MCF 10A (cell line): ENCODE measurements at regions of chr4 and their contacts with region 1.

Region 1: GRCh38 chr4:34720571-34720970 is 1523.7 kb downstream of the ARAP2 start:
- DNase-seq: peak; percentile 64
- H3K4me3 Mint-ChIP-seq: no peak overlapping the region
- H3K27ac Mint-ChIP-seq: no peak overlapping the region
- H3K4me1 Mint-ChIP-seq: peaks cover 6% of the 10 kb centered on the region
- H3K27me3 Mint-ChIP-seq: no peaks in the 10 kb centered on the region
- CTCF ChIP-seq: peak; percentile 66

Region 2: DNA sequence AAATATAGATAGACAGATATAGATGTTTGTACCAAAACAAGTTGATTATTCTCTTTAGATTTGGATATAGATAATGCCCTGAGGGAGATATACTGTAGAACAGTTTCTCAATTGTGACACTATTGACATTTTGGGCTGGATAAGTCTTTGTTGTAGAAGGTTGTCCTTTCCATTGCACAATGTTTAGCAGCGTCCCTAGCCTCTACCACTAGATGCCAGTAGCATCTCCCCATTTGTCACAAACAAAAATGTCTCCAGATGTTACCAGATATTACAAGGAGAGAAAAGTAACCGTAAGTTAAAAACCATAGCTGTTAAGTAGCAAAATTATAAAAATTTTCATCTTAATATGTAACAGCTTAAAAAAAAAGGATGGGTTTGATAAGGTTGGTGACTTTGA is 1071.6 kb before region 1 on chr4:
- CTCF ChIA-PET with region 1: interaction called, 23 read pairs
- POLR2A ChIA-PET with region 1: no interaction called
- intact Hi-C with region 1: loop called (anchors 1 kb)
- DNase-seq: peak; percentile 42
- H3K4me3 Mint-ChIP-seq: no peak overlapping the region
- H3K27ac Mint-ChIP-seq: no peak overlapping the region
- H3K4me1 Mint-ChIP-seq: peaks cover 7% of the 10 kb centered on the region
- H3K27me3 Mint-ChIP-seq: no peaks in the 10 kb centered on the region
- CTCF ChIP-seq: peak; percentile 57

Region 3: GRCh38 chr4:33715841-33716395 is 1004.7 kb before region 1 on chr4:
- CTCF ChIA-PET with region 1: interaction called, 4 read pairs
- POLR2A ChIA-PET with region 1: no interaction called
- intact Hi-C with region 1: loop called (anchors 10 kb)
- DNase-seq: peak; percentile 93
- H3K4me3 Mint-ChIP-seq: peak overlapping the region; percentile 33
- H3K27ac Mint-ChIP-seq: peak overlapping the region; percentile 81
- H3K4me1 Mint-ChIP-seq: peaks cover 8% of the 10 kb centered on the region
- H3K27me3 Mint-ChIP-seq: peaks cover 12% of the 10 kb centered on the region
- CTCF ChIP-seq: no peak

Region 4: GRCh38 chr4:34422472-34423175 is 297.9 kb before region 1 on chr4:
- CTCF ChIA-PET with region 1: interaction called, 6 read pairs
- POLR2A ChIA-PET with region 1: no interaction called
- intact Hi-C with region 1: loop called (anchors 10 kb)
- DNase-seq: peak; percentile 3
- H3K4me3 Mint-ChIP-seq: no peak overlapping the region
- H3K27ac Mint-ChIP-seq: no peak overlapping the region
- H3K4me1 Mint-ChIP-seq: no peaks in the 10 kb centered on the region
- H3K27me3 Mint-ChIP-seq: no peaks in the 10 kb centered on the region
- CTCF ChIP-seq: no peak

Region 5: DNA sequence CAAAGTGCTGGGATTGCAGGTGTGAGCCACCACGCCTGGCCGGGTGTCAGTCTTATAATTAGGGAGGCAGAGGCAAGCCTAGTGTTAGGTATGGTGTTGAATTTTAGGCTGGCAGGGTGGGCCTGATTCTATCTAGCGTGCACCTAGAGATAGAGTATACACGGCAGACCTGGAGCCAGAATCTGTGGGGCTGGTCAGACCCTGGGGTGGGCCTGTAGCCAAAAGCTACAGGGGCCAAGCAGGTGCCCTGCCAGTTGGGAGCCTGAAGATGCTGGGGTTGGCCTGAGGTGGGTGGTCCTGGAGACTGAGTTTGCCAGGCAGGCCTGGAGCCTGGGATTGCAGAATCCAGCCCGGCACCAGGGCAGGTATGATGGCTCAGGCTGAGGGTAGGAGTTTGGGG is 56.5 kb before region 1 on chr4:
- CTCF ChIA-PET with region 1: no interaction called
- POLR2A ChIA-PET with region 1: no interaction called
- intact Hi-C with region 1: no loop called
- DNase-seq: no peak
- H3K4me3 Mint-ChIP-seq: no peak overlapping the region
- H3K27ac Mint-ChIP-seq: no peak overlapping the region
- H3K4me1 Mint-ChIP-seq: no peaks in the 10 kb centered on the region
- H3K27me3 Mint-ChIP-seq: no peaks in the 10 kb centered on the region
- CTCF ChIP-seq: no peak

Region 6: DNA sequence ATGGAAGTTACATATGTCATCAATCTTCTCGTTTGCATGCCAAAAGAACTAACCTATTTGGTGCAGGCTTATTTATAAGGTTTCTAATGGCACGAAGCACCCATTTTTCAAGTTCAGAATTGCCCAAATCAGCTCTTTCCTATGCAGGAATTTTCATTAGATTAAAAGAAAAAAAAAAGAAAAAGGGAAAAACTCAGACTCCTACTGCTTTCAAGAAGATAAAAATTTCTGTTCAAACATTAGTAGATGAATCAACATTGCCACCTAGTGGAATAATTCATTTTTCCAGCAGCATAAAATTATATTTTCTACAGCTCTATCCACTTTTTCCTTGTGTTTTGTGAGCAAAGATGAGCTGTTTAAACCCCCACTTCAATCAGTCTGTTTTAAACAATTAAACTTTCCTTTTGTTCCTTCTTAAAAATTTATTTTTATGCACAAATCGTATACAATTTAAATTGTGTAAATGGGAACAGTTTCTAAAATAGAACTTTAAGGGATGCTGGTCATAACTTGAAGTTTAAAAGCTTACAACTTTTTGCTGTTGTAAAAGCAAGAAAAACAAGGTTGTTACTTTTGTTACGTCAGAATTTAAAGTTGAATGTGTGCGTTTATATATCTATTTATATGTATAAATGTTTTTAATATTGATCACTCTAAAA is 1213.9 kb after region 1 on chr4:
- CTCF ChIA-PET with region 1: interaction called, 3 read pairs
- POLR2A ChIA-PET with region 1: no interaction called
- intact Hi-C with region 1: loop called (anchors 5 kb)
- DNase-seq: peak; percentile 48
- H3K4me3 Mint-ChIP-seq: no peak overlapping the region
- H3K27ac Mint-ChIP-seq: no peak overlapping the region
- H3K4me1 Mint-ChIP-seq: no peaks in the 10 kb centered on the region
- H3K27me3 Mint-ChIP-seq: no peaks in the 10 kb centered on the region
- CTCF ChIP-seq: peak; percentile 58